ENCODE measurements at regions of chr2 and their contacts with region 1.

Region 1: DNA sequence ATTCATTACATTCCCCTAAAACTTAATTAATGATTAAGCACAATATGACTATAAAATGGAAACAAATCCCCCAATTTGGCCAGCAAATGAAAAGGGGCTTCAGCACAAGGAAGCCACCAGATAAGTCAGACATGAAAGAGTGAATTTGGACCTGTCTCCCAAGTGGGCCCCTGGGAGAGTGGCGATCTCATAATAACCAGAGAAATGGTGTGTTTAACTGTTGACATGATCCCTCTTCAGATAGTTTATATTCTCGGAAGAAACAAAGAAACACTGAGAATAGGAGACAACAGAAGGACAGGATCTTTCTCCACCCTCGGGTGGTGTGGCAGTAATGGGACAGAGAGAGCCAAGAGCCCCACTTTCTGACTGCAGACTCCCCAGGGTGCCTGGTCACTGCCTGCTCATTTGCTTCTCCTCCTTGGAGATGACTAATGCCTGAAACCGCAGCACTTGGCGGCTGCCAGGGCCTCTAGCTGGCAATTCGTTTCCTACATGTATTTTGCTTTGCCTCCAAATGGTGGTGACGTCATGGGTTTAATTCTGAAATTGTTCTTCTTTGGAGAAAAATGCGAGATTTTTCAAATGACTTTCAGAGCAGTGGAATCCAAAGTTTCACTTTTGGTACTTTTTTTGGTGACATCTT is 46.4 kb upstream of the SPP2 start:
- DNase-seq: peak; percentile 82 to 85
- H3K4me3 ChIP-seq: no peak overlapping the region
- H3K27ac ChIP-seq: no peak overlapping the region
- H3K4me1 ChIP-seq: peaks cover 15% of the 10 kb centered on the region
- H3K27me3 ChIP-seq: no peaks in the 10 kb centered on the region
- CTCF ChIP-seq: no peak

Region 2: DNA sequence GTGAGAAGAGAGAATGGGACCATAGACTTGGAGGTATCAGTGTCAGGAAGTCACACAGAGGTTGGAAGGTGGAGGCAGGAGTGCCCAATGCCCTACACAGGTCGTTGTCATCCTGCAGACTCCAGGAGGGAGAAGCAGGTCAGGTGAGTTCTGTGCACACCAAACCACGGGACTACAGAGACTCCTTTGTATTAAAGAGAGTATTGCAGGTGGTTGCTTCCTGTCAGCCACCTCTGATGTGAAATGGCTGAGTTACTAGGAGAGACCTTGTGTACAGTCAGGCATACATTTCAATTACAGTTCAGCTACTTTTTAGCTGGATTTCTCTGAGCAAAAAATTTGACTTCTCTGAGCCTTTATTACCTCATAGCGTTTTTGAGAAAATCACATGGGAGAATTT is 98.0 kb after region 1 on chr2:
- CTCF ChIA-PET with region 1: no interaction called
- POLR2A ChIA-PET with region 1: no interaction called
- intact Hi-C with region 1: loop called (anchors 5 kb)
- DNase-seq: peak; percentile 38 to 67
- H3K4me3 ChIP-seq: no peak overlapping the region
- H3K27ac ChIP-seq: no peak overlapping the region
- H3K4me1 ChIP-seq: peaks cover 10% of the 10 kb centered on the region
- H3K27me3 ChIP-seq: no peaks in the 10 kb centered on the region
- CTCF ChIP-seq: peak; percentile 31; the same call in 1 of the 2 replicates

Region 3: GRCh38 chr2:234463626-234464290 is 459.7 kb after region 1 on chr2:
- CTCF ChIA-PET with region 1: no interaction called
- POLR2A ChIA-PET with region 1: interaction called, 10 read pairs
- intact Hi-C with region 1: no loop called
- DNase-seq: peak; percentile 83 to 94
- H3K4me3 ChIP-seq: peak overlapping the region; percentile 32; the same call in 1 of the 2 replicates
- H3K27ac ChIP-seq: 0 out of 2 replicates have a peak overlapping the region, but pooled peaks have one; percentile 6
- H3K4me1 ChIP-seq: peaks cover 37% of the 10 kb centered on the region
- H3K27me3 ChIP-seq: no peaks in the 10 kb centered on the region
- CTCF ChIP-seq: no peak

Measured in PC-9 (cell line).